Ascending aorta (tissue), 2 donors: ENCODE measurements at regions of chr2 and their contacts with region 1.

Region 1: DNA sequence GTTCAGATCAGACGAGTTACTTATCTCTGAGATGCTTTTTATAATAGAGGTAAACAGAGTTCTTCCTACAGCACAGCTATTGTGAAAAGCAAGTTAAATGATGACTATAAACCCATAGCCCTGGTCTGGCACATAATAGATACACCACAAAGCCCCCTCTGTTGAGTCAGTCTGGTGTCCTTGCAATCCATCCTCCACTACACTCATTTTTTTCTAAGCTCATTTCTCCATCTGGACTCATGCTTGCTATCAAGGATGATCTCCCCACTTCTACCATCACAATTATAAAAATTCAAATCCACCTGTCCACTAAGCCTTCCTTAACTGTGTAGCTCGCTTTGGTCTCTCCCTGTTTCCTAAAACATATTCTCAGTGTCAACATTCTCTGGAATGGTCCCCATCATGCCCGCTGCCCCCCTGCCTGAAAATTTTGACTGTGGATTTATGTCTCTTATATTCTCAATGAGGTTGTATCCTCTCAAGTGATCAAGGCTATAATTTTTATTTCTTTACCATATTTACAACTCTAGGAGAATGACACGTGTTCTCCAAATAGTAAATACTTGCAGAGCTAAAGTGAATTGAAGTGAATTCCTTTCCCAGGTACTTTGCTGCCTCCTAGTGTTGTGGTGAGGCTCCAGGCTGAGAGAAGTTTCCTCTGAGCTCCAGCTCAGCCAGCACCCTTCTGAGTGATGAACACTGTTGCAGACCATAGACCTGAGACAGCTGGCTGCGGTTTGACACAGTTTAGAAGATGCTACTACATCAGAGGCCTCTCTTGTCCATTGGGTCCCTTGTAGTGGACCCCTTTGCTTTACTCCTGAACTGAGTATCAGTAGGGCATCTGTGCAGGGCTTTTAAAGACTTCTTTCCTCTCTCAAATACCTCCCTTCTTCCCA is 108.7 kb downstream of the DPP10 start:
- DNase-seq: peak in 1 of 2 donors; percentile 69
- H3K4me3 ChIP-seq: no peak overlapping the region
- H3K27ac ChIP-seq: no peak overlapping the region
- H3K4me1 ChIP-seq: no peaks in the 10 kb centered on the region
- H3K27me3 ChIP-seq: no peaks in the 10 kb centered on the region
- CTCF ChIP-seq: peak; percentile 37 to 79 (median 75)

Region 2: DNA sequence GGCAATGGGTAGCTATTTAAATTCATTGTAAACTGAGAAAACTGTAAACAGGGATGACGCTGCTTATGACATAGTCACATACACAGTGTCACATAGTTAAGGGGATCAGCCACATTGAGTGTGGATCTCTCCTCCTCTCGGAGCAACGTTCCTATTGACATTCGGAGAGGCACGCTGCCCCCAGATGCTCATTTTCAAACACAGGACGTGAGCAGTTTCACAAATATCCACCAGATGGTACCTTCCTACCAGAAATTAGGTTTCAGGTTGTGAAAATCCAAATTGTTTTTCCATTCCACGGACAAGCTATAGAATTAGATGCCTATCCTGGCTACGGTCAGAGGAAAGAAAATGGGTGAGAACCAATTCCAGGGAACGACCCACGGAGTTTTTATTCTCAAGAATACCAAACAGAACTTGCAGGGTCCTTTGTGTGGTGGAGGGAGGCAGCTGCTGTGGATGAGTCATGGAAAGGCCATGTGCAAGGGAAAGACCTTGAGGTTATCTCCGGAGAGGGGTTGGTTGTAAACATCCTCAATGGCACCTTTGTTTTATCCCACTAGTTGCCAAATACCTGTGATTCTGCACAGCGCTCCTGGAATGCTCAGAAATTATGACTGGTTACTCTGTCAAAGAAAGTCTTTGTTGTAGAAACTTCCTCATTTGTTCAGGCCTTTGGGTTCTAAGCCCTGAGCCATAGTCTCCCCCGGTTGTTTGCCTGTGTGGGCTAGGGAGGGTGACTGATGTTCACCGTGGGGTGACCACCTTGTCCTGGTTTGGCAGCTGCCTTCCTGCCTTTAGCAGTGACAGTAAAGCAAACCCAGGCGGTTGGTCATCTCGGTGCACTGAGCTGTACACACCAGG is 573.3 kb before region 1 on chr2:
- intact Hi-C with region 1: loop called (anchors 2 kb)
- DNase-seq: no peak
- H3K4me3 ChIP-seq: no peak overlapping the region
- H3K27ac ChIP-seq: no peak overlapping the region
- H3K4me1 ChIP-seq: no peaks in the 10 kb centered on the region
- H3K27me3 ChIP-seq: no peaks in the 10 kb centered on the region
- CTCF ChIP-seq: peak in 2 of 3 experiments; percentile 22 to 42

Region 3: DNA sequence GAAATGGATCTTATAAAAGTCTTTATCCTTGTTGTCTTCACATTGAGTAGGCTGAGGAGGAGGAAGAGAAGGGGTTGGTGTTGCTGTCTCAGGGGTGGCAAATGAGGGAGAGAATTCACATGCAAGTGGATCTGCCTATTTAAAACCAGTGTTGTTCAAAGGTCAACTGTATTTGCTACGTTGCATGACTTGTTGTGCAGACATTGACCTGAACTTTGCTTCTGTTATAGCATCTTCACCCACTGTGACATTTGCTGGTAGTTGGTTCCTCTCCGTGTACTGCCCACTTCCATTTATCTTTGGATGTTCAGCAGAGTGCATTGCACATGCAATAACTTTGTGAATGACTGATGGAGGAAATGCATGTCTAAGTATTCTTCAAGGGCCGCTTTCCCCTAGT is 337.3 kb before region 1 on chr2:
- intact Hi-C with region 1: loop called (anchors 5 kb)
- DNase-seq: no peak
- H3K4me3 ChIP-seq: no peak overlapping the region
- H3K27ac ChIP-seq: no peak overlapping the region
- H3K4me1 ChIP-seq: no peaks in the 10 kb centered on the region
- H3K27me3 ChIP-seq: no peaks in the 10 kb centered on the region
- CTCF ChIP-seq: no peak

Region 4: DNA sequence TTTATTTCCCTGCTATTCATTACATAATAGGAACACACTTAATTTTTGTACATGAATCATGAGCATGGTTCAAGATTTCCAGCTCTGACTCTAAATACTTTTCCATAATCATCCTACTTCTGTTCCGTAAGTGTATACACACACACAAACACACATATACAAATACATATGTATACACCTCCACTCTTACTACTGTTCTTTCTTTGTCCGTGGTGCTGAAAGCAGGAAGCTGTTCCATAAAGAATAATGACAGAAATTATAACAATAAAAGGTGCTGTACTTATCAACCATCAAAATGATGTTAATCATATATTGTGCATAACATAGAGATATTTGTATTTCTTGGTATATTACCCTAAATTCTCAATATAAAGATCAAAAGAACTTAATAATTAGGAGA is 668.2 kb after region 1 on chr2:
- intact Hi-C with region 1: no loop called
- DNase-seq: no peak
- H3K4me3 ChIP-seq: no peak overlapping the region
- H3K27ac ChIP-seq: no peak overlapping the region
- H3K4me1 ChIP-seq: no peaks in the 10 kb centered on the region
- H3K27me3 ChIP-seq: no peaks in the 10 kb centered on the region
- CTCF ChIP-seq: no peak